Cardiac septum (tissue), 1 donor: ENCODE measurements at regions of chr11 and their contacts with region 1.

Region 1: GRCh38 chr11:67428052-67428914 is at the start of gene RPS6KB2:
- DNase-seq: peak; percentile 99
- total RNA-seq, gene RPS6KB2: 23.2 TPM

Region 2: DNA sequence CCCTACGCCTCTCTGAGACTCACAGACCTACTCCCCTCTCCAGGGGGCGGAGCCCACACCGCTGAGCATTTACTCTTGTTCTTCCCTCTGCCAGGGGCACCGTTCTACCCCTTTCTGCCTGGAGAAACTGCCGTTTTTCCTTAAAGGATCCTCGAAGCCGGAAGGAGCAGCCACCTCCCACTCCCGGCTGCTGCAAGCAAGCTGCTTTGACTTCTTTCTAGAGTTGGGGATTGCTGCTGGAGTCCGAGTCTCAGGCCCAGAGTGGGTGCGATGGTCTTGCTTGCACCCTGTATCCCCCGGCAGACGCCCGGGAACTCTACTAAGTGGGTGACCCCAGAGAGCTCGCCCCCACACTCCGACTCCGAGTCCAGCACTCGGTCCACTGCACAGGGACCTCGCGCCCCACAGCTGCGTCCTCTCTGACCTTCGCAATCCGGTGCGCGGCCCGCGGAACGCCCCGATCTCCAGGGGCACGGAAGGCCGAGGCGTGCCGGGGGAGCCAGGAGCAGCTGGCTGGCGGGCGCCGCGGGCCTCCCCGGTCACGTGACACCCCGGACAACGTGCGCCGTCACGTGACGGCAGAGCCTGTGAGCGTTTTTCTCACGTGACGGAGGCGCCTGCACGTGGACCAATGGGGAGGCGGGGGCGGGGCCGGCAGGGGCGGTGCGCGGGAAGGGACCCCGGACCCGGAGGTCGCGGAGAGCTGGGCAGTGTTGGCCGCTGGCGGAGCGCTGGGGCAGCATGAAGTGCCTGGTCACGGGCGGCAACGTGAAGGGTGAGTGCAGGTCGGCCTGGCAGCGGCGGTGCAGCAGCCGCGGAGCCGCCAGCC is 36.8 kb before region 1 on chr11 and contains the start of gene RAD9A:
- intact Hi-C with region 1: loop called (anchors 5 kb)
- DNase-seq: peak; percentile 98
- total RNA-seq, gene RAD9A: 4.8 TPM